ENCODE measurements at regions of chr3 and their contacts with region 1.

Region 1: DNA sequence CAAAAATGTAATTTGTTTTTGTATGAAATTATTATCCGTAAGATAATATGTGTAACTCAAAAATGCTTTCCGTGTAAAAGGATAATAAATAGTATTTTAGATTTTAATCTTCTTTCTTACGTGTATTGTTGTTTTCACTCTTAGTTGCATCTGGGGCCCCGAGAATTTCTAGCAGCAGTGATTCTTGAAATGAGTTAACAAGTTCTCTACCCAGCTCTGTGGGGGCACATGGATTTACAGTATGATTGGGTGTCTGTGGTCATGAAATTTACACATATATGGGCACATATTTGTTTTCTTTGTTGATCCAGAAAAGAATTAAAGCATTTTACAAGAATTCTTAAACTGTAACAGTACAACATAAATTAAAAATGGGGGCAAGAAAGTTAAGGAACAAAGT is 145.9 kb upstream of the LRRFIP2 start:
- DNase-seq: peak; percentile 43
- ATAC-seq: no peak
- H3K4me3 Mint-ChIP-seq: no peak overlapping the region
- H3K27ac Mint-ChIP-seq: peak overlapping the region; percentile 69
- H3K4me1 Mint-ChIP-seq: peaks cover 25% of the 10 kb centered on the region
- H3K27me3 Mint-ChIP-seq: no peaks in the 10 kb centered on the region
- CTCF ChIP-seq: no peak

Region 2: DNA sequence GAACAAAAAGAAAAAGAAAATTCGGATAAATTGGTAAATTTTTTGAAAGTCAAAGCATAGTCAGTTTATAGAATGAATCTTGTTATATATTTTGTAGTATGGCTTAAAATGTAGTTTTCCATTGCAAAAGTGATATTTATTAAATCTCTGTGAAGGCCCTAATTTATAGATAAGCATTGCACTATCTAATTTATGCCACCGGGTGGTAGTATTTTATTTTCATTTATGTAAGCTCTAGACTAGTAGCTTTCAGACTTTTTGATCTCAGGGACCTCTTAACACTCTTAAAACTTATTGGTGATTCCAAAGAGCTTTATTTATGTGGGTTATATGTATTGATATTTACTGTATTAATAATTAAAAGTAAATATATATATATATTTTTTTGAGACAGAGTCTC is 12.0 kb before region 1 on chr3:
- CTCF ChIA-PET with region 1: interaction called, 11 read pairs
- POLR2A ChIA-PET with region 1: no interaction called
- intact Hi-C with region 1: no loop called
- DNase-seq: no peak
- ATAC-seq: no peak
- H3K4me3 Mint-ChIP-seq: no peak overlapping the region
- H3K27ac Mint-ChIP-seq: no peak overlapping the region
- H3K4me1 Mint-ChIP-seq: peaks cover 17% of the 10 kb centered on the region
- H3K27me3 Mint-ChIP-seq: no peaks in the 10 kb centered on the region
- CTCF ChIP-seq: peak; percentile 54

Region 3: DNA sequence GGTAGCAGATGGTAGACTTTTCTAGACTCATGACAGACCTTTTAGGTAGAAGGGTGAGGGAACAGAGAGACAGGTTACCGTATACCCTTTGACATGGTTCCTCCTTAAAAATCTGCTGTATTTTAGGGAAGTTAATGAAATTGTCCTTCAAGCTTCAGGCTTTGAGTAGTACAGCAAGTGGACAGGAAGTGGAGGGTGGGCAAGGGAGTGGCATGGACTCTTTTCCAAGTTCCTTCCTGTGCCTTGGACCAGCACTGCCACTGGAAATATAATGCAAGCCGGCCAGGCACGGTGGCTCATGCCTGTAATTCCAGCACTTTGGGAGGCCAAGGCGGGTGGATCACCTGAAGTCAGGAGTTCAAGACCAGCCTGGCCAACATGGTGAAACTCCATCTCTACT is 10.2 kb after region 1 on chr3:
- CTCF ChIA-PET with region 1: no interaction called
- POLR2A ChIA-PET with region 1: no interaction called
- intact Hi-C with region 1: no loop called
- DNase-seq: no peak
- ATAC-seq: no peak
- H3K4me3 Mint-ChIP-seq: no peak overlapping the region
- H3K27ac Mint-ChIP-seq: no peak overlapping the region
- H3K4me1 Mint-ChIP-seq: peaks cover 3% of the 10 kb centered on the region
- H3K27me3 Mint-ChIP-seq: no peaks in the 10 kb centered on the region
- CTCF ChIP-seq: no peak

Measured in activated CD8-positive, alpha-beta T cell treated with anti-CD3 and anti-CD28 coated beads for 36 hours (primary cell).